Esophagus squamous epithelium (tissue), 5 donors: ENCODE measurements at regions of chr12 and their contacts with region 1.

Region 1: DNA sequence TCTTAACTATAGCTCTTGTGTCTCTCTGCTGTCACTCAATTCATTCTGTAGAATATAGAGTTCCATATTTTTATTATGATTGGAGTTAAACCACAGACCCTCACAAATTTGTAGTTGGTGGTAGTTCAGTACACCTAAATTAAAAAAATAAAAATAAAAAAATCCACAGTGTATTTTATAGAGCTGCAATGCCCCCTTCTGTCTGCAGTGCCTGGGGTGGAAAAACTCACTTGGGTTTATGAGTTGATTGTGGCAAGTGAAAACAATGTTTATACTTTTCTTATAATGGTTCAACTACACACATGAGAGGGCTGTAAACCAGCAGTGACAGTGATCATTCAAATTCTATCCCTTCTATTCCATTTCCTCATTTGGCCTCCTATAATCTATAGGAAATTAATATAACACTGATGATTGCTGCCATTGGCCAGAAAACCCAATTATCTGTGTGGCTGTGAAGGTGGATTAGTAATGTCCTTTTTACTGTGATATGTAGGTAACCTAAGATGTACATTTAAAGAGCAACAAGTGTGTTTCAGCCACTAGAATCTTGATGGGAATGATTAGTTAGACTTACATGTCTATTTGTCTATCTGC is 166.9 kb upstream of the LRIG3 start:
- DNase-seq: no peak
- H3K4me3 ChIP-seq: no peak overlapping the region
- H3K27ac ChIP-seq: no peak overlapping the region
- H3K4me1 ChIP-seq: peaks cover 0 to 35% (median 3%) of the 10 kb centered on the region in 3 donors
- H3K27me3 ChIP-seq: no peaks in the 10 kb centered on the region
- CTCF ChIP-seq: peak in 5 of 6 experiments; percentile 41 to 57 (median 54)
- POLR2A ChIP-seq: no peak

Region 2: GRCh38 chr12:58540480-58541299 is 546.5 kb before region 1 on chr12:
- intact Hi-C with region 1: loop called (anchors 10 kb)
- DNase-seq: no peak
- H3K4me3 ChIP-seq: no peak overlapping the region
- H3K27ac ChIP-seq: peak overlapping the region in 2 of 4 donors; percentile 13 to 31
- H3K4me1 ChIP-seq: peaks cover 0 to 43% (median 7%) of the 10 kb centered on the region in 3 donors
- H3K27me3 ChIP-seq: no peaks in the 10 kb centered on the region
- CTCF ChIP-seq: peak; percentile 51 to 84 (median 69)
- POLR2A ChIP-seq: no peak

Region 3: DNA sequence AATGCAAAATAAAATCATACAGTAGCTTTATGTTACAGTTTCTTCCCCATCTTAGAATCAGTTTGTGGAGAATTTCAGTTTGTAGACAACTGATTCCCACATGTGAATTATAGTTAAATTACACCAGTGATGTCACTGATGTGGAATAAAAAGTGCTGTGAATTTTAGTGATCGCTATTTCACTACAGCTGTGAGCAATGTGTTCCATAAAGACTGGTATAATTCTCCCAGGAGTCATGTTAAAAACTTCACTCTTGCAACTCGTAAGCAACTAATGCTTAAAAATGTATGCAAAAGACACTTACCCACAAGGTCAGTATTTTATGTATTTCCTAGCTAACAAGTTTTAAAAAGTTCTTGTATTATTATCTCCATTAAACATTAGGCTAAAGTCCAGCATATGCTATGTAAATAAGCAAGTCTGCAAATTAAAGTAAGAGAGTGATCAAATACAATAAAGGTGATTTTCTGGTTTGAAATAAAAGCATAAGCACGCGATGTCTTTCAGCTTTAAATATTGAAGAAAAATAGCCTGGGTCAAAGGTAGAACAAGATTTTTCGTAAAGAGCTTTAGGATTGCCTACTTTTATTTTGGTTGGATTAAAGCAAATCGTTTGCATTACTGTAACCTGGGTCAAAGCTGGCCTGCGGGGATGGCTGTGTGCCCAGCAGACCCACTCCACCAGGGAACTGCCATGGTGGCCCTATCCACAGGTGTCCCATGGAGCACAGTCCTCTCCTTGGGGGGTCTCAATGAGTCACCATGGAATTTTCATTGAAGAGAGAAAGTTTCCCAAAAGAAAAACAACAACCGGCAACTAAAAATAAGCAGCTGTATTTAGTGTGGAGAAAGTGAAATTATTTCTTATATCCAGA is 154.1 kb before region 1 on chr12:
- intact Hi-C with region 1: no loop called
- DNase-seq: no peak
- H3K4me3 ChIP-seq: no peak overlapping the region
- H3K27ac ChIP-seq: no peak overlapping the region
- H3K4me1 ChIP-seq: no peaks in the 10 kb centered on the region
- H3K27me3 ChIP-seq: no peaks in the 10 kb centered on the region
- CTCF ChIP-seq: no peak
- POLR2A ChIP-seq: no peak